ENCODE measurements at regions of chr9 and their contacts with region 1.

Region 1: GRCh38 chr9:14236591-14236990 is 77.3 kb downstream of the NFIB start:
- DNase-seq: no peak
- ATAC-seq: no peak
- H3K4me3 Mint-ChIP-seq: no peak overlapping the region
- H3K27ac Mint-ChIP-seq: 0 out of 2 replicates have a peak overlapping the region, but pooled peaks have one; percentile 16
- H3K4me1 Mint-ChIP-seq: peaks cover 49% of the 10 kb centered on the region
- H3K27me3 Mint-ChIP-seq: no peaks in the 10 kb centered on the region
- CTCF ChIP-seq: no peak

Region 2: DNA sequence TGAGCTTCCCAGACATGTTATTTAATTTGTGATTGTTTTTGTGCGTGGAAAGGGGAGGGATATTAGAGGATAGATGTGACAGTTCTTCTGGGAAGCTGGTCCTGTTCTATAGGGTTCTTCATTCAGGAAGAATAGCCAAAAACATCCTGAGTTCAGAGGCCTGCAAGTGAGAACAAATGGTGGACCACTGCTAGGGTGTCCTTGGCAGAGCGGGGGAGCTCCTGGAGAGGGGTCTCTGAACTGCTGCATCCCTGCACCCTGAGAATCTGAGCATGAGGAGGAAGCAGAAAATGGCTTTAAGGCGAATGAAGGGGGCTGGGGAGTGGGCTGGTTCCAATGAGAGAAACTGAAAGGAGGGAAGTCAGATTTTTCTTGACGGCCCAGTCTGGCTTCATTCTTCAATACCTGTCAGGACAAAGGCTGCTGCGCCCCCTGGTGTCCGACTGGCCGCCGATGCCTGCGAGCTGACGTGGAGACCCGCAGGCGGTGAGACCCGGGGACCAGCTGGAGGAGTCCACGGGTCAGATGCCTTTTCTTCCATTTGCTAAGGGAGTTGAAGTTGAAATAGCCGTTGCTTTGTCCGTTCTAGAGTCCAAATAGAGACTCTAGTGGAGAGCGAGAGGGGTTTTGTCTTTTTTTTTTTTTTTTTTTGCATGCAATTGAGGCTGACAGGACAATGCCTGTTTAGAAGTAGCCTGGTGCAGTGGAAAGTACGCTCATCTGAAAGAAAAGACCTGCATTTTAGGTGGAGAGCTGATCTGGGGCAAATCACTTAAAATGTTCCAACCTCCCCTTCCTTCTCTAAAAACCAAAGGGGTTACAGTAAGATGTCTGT is 116.8 kb after region 1 on chr9:
- CTCF ChIA-PET with region 1: no interaction called
- POLR2A ChIA-PET with region 1: interaction called, 15 read pairs
- DNase-seq: peak; percentile 98
- ATAC-seq: peak; percentile 75
- H3K4me3 Mint-ChIP-seq: peak overlapping the region; percentile 40
- H3K27ac Mint-ChIP-seq: no peak overlapping the region
- H3K4me1 Mint-ChIP-seq: peaks cover 67% of the 10 kb centered on the region
- H3K27me3 Mint-ChIP-seq: peaks cover 60% of the 10 kb centered on the region
- CTCF ChIP-seq: peak; percentile 84

Region 3: GRCh38 chr9:14452539-14452938 is 215.9 kb after region 1 on chr9:
- CTCF ChIA-PET with region 1: no interaction called
- POLR2A ChIA-PET with region 1: no interaction called
- DNase-seq: no peak
- ATAC-seq: no peak
- H3K4me3 Mint-ChIP-seq: no peak overlapping the region
- H3K27ac Mint-ChIP-seq: no peak overlapping the region
- H3K4me1 Mint-ChIP-seq: peaks cover 5% of the 10 kb centered on the region; the same call in 1 of the 2 replicates
- H3K27me3 Mint-ChIP-seq: no peaks in the 10 kb centered on the region
- CTCF ChIP-seq: no peak